H1 (cell line): ENCODE measurements at regions of chr19 and their contacts with region 1.

Region 1: DNA sequence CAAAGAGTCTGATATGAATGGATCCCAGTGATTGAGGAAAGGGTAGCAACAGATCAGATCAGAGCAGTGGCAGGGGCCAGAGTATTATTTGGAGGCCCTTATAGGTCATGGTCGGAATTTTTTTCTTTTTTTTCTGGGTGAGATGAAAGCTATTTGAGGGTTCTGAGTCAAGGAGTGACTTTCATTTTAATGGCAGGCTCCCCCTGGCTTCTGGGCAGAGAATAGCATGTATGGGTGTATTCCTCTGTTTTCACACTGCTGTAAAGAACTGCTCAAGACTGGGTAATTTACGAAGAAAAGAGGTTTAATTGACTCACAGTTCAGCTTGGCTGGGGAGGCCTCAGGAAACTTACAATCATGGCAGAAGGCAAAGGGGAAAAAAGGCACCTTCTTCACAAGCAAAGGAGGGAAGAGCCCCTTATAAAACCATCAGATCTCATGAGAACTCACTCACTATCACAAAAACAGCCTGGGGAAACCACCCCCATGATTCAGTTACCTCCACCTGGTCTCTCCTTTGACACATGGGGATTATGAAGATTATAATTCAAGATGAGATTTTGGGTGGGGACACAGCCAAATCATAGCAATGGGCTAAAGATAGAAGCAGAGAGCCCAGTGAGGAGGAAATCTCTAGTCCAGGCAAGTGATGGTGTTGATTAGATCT is 3.0 kb upstream of the SLC6A16 start:
- DNase-seq: no peak
- H3K4me3 ChIP-seq: no peak overlapping the region
- H3K27ac ChIP-seq: no peak overlapping the region
- H3K4me1 ChIP-seq: no peaks in the 10 kb centered on the region
- H3K27me3 ChIP-seq: no peaks in the 10 kb centered on the region; a peak in 1 of 7 replicates
- CTCF ChIP-seq: peak in 2 of 3 experiments; percentile 63 to 69; a peak in 3 of 4 replicates
- EP300 ChIP-seq: no peak
- POLR2A ChIP-seq: no peak
- RAD21 ChIP-seq: peak; percentile 41 to 54

Region 2: GRCh38 chr19:49133621-49134454 is 194.2 kb before region 1 on chr19:
- CTCF ChIA-PET with region 1: no interaction called
- POLR2A ChIA-PET with region 1: no interaction called
- DNase-seq: peak in 1 of 2 experiments; percentile 90
- H3K4me3 ChIP-seq: peak overlapping the region in 3 of 4 experiments; percentile 21 to 55 (median 27); a peak in 4 of 8 replicates
- H3K27ac ChIP-seq: no peak overlapping the region
- H3K4me1 ChIP-seq: peaks cover 4 to 14% (median 6%) of the 10 kb centered on the region in 4 experiments; a peak in 6 of 7 replicates
- H3K27me3 ChIP-seq: no peaks in the 10 kb centered on the region
- CTCF ChIP-seq: no peak
- EP300 ChIP-seq: no peak
- POLR2A ChIP-seq: no peak
- RAD21 ChIP-seq: no peak

Region 3: DNA sequence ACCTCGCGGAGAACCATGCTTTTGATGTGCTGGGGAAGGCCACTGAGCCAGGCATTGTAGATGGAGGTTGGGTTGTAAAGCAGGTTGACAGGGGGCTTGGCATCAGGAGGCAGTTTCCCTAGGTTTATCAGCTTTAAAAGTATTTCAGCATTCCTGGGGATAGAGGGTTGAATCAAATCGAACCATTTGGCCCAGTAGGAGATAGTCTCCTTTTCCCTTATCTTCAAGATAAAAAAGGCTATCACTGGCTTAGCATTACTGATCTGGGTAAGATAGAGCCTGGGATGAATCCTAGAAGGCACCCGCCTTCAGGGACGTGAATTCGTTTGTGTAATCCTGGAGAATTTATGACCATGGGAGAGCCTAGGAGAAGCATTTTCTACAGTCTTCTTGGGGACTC is 33.6 kb before region 1 on chr19:
- CTCF ChIA-PET with region 1: interaction called, 10 read pairs
- POLR2A ChIA-PET with region 1: no interaction called
- DNase-seq: no peak
- H3K4me3 ChIP-seq: no peak overlapping the region
- H3K27ac ChIP-seq: no peak overlapping the region
- H3K4me1 ChIP-seq: no peaks in the 10 kb centered on the region
- H3K27me3 ChIP-seq: no peaks in the 10 kb centered on the region
- CTCF ChIP-seq: no peak
- EP300 ChIP-seq: no peak
- POLR2A ChIP-seq: no peak
- RAD21 ChIP-seq: no peak

Region 4: DNA sequence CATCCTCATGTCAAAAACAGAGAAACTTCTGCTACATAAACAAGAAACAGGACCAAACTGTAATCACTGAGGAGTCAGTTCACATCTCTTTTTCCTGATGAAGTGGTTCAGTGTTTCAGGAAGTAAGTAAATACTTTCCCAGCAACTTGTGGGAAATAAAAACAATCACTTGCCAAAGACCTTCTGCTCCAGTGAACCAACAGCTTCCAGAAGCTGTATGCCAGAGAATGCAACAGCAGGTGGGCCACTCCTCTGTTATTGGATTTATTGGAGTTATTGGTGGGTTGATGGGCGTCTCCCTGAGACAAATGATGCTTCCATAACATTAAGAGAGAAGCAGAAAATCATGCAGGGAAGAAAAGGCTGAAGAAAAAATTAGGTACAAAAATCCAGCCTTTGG is 12.9 kb before region 1 on chr19:
- CTCF ChIA-PET with region 1: interaction called, 14 read pairs
- POLR2A ChIA-PET with region 1: no interaction called
- DNase-seq: no peak
- H3K4me3 ChIP-seq: no peak overlapping the region
- H3K27ac ChIP-seq: no peak overlapping the region
- H3K4me1 ChIP-seq: no peaks in the 10 kb centered on the region
- H3K27me3 ChIP-seq: no peaks in the 10 kb centered on the region
- CTCF ChIP-seq: no peak
- EP300 ChIP-seq: no peak
- POLR2A ChIP-seq: no peak
- RAD21 ChIP-seq: no peak